ENCODE measurements at regions of chr19 and their contacts with region 1.

Region 1: GRCh38 chr19:52269338-52270261 is at the start of gene ZNF766:
- DNase-seq: peak; percentile 94 to 96 (median 95)
- H3K4me3 ChIP-seq: peak within 1 kb of the TSS; percentile 89 to 97 (median 97)
- H3K4me3 Mint-ChIP-seq: peak within 1 kb of the TSS; percentile 97 to 100
- H3K27ac ChIP-seq: peak within 1 kb of the TSS; percentile 99
- H3K27ac Mint-ChIP-seq: peak within 1 kb of the TSS; percentile 95 to 99 (median 98)
- H3K4me1 ChIP-seq: peaks cover 9 to 15% of the 10 kb centered on the region in 2 donors
- H3K4me1 Mint-ChIP-seq: peaks cover 14% of the 10 kb centered on the region
- H3K27me3 ChIP-seq: no peaks in the 10 kb centered on the region
- H3K27me3 Mint-ChIP-seq: no peaks in the 10 kb centered on the region
- CTCF ChIP-seq: no peak
- polyA plus RNA-seq, gene ZNF766: 4.0 to 15.0 (median 8.8) TPM

Region 2: GRCh38 chr19:52296773-52297600 is 27.4 kb after region 1 on chr19 and contains the start of gene ZNF480:
- intact Hi-C with region 1: loop called (anchors 1 kb)
- DNase-seq: peak; percentile 80 to 86 (median 82)
- H3K4me3 ChIP-seq: peak within 1 kb of the TSS; percentile 93 to 99 (median 94)
- H3K4me3 Mint-ChIP-seq: peak within 1 kb of the TSS; percentile 95 to 97
- H3K27ac ChIP-seq: peak within 1 kb of the TSS; percentile 88 to 94
- H3K27ac Mint-ChIP-seq: peak within 1 kb of the TSS; percentile 91 to 98 (median 94)
- H3K4me1 ChIP-seq: peaks cover 15 to 18% of the 10 kb centered on the region in 2 donors
- H3K4me1 Mint-ChIP-seq: peaks cover 17% of the 10 kb centered on the region
- H3K27me3 ChIP-seq: no peaks in the 10 kb centered on the region
- H3K27me3 Mint-ChIP-seq: peaks cover 0 to 1% (median 0%) of the 10 kb centered on the region in 3 donors
- CTCF ChIP-seq: no peak
- polyA plus RNA-seq, gene ZNF480: 6.6 to 7.6 (median 7.4) TPM

Region 3: GRCh38 chr19:52535771-52536447 is 266.3 kb after region 1 on chr19:
- intact Hi-C with region 1: loop called in 1 of 2 experiments (anchors 10 kb)
- DNase-seq: peak; percentile 68 to 80 (median 69)
- H3K4me3 ChIP-seq: peak overlapping the region; percentile 56 to 80 (median 71)
- H3K4me3 Mint-ChIP-seq: peak overlapping the region; percentile 88 to 93
- H3K27ac ChIP-seq: peak overlapping the region; percentile 77 to 88
- H3K27ac Mint-ChIP-seq: peak overlapping the region; percentile 76 to 96 (median 88)
- H3K4me1 ChIP-seq: peaks cover 52 to 61% of the 10 kb centered on the region in 2 donors
- H3K4me1 Mint-ChIP-seq: peaks cover 61% of the 10 kb centered on the region
- H3K27me3 ChIP-seq: no peaks in the 10 kb centered on the region
- H3K27me3 Mint-ChIP-seq: peaks cover 0 to 4% (median 3%) of the 10 kb centered on the region in 3 donors
- CTCF ChIP-seq: peak; percentile 32

Region 4: GRCh38 chr19:52734893-52735661 is 465.5 kb after region 1 on chr19 and contains the start of gene ZNF611:
- intact Hi-C with region 1: loop called in 1 of 2 experiments (anchors 10 kb)
- DNase-seq: peak; percentile 91 to 94 (median 93)
- H3K4me3 ChIP-seq: peak within 1 kb of the TSS; percentile 83 to 97 (median 94)
- H3K4me3 Mint-ChIP-seq: peak within 1 kb of the TSS; percentile 85 to 94
- H3K27ac ChIP-seq: peak within 1 kb of the TSS; percentile 80 to 93
- H3K27ac Mint-ChIP-seq: peak within 1 kb of the TSS; percentile 88 to 97 (median 94)
- H3K4me1 ChIP-seq: peaks cover 11 to 19% of the 10 kb centered on the region in 2 donors
- H3K4me1 Mint-ChIP-seq: peaks cover 21% of the 10 kb centered on the region
- H3K27me3 ChIP-seq: no peaks in the 10 kb centered on the region
- H3K27me3 Mint-ChIP-seq: peaks cover 0 to 3% (median 0%) of the 10 kb centered on the region in 3 donors
- CTCF ChIP-seq: peak; percentile 77
- polyA plus RNA-seq, gene ZNF611: 5.5 to 20.2 (median 12.0) TPM

Measured in CD14-positive monocyte (primary cell).